Posterior vena cava (tissue), 2 donors: ENCODE measurements at regions of chr10 and their contacts with region 1.

Region 1: DNA sequence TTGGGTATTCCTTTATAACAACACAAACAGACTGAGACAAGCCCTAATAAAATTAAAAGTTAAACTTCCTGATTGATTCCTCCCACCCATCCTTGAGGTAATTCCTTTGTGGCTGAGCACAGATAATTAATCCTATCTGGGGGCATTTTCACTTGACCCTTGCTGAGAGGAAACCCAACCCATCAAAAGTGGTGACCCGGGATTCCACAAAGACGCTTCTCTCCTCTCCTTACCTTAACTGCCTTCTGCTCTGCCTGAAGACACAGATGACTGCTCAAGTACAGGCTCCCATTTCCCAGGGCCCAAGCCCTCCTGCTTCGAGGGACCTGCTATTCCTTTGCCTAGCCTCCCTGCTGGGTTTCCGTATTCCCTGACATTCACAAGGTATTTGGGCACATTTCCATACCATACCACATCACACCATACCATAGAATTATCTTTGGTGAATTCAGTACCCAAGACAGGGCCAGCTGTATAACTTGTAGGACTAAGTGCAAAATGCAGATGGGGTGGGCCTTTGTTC is 9.8 kb upstream of the MAPK8 start:
- DNase-seq: no peak

Region 2: GRCh38 chr10:47137311-47137851 is 1159.3 kb before region 1 on chr10:
- intact Hi-C with region 1: loop called in 1 of 2 experiments (anchors 5 kb)
- DNase-seq: no peak

Region 3: DNA sequence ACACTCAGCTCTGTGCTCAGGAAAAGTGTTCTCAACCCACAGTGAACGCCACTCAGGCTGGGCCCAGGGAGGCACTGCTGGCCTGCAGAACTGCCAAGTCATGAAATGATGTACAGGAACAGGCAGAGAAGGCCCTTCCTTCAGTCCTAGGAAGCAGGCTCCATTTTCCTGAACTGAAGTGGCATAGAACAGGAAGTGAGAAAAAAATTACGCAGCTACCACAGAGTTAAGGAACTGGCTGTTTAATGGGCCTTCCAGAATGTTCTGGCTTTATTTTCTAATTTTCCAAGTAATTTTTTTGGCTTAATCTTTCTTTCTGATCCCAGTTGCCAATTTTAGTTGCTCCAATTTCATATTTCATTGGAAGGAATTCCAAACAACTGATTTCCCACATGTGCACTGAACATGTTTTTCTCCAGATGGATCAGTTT is 603.7 kb after region 1 on chr10:
- intact Hi-C with region 1: no loop called
- DNase-seq: no peak